CD4-positive, alpha-beta T cell (primary cell): ENCODE measurements at regions of chr2 and their contacts with region 1.

Region 1: DNA sequence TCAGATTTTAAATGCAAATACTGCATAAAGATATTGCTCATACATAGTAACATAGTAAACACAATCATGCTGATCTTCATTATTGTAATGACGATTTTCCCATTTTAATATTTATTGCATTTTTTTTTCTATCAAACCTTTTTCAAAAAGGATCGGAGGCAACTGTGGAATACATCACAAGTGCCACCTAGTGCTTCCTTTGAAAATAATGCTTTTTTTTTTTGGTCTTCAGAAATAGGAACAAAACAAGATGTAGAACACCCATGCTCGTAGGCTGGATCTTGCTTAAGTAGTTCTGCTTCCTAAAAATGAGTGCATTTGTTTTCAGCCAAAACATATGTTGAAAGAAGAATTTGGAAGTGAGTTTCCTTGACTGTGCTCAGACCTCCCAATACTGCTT is 35.7 kb upstream of the GPR155 start:
- DNase-seq: peak in 3 of 14 experiments; percentile 27 to 40 (median 39)
- ATAC-seq: no peak
- H3K4me3 ChIP-seq: no peak overlapping the region
- H3K4me3 Mint-ChIP-seq: no peak overlapping the region
- H3K27ac ChIP-seq: no peak overlapping the region
- H3K27ac Mint-ChIP-seq: no peak overlapping the region
- H3K4me1 ChIP-seq: peaks cover 2% of the 10 kb centered on the region
- H3K4me1 Mint-ChIP-seq: peaks cover 17% of the 10 kb centered on the region
- H3K27me3 ChIP-seq: no peaks in the 10 kb centered on the region
- H3K27me3 Mint-ChIP-seq: no peaks in the 10 kb centered on the region
- CTCF ChIP-seq: peak; percentile 75

Region 2: GRCh38 chr2:173696274-173696673 is 826.3 kb before region 1 on chr2:
- CTCF ChIA-PET with region 1: no interaction called
- POLR2A ChIA-PET with region 1: no interaction called
- intact Hi-C with region 1: no loop called
- DNase-seq: no peak
- ATAC-seq: no peak
- H3K4me3 ChIP-seq: no peak overlapping the region
- H3K4me3 Mint-ChIP-seq: no peak overlapping the region
- H3K27ac ChIP-seq: no peak overlapping the region
- H3K27ac Mint-ChIP-seq: no peak overlapping the region
- H3K4me1 ChIP-seq: no peaks in the 10 kb centered on the region
- H3K4me1 Mint-ChIP-seq: no peaks in the 10 kb centered on the region
- H3K27me3 ChIP-seq: no peaks in the 10 kb centered on the region
- H3K27me3 Mint-ChIP-seq: peaks cover 5% of the 10 kb centered on the region
- CTCF ChIP-seq: no peak

Region 3: DNA sequence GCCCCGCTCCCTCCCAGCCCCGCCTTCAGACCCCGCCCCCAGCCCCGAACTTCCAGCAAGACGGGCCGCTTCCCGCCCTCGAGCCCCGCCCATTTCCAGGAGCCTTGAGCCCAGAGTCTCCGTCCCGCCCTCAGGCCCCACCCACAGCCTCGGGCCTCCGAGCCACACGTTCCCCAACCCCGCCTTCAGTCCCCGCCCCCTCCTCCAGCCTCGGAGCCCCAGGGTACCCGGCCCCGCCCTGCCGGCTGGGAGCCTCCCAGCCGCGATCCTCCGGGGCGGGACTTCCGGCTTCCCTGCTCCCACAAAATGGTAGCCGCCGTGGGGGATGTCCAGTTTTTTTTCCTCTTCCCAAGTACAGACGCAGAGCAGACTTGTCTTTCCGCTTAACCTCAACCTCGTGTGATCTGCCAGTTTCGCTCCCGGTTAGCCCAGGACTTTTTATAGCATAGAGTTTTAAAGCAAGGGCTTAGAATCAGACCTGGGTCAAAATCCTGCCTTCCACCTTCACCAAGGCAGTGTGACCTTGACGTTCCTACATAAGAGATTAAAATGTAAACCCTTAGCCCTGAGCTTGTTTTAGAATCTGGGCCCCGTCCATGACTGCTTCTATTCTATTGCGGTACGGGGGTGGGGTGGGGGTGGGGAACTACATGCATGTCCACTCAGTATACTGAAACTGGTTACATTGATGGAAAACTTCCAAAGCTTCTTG is 35.3 kb before region 1 on chr2:
- CTCF ChIA-PET with region 1: no interaction called
- POLR2A ChIA-PET with region 1: interaction called, 6 read pairs
- intact Hi-C with region 1: loop called (anchors 5 kb)
- DNase-seq: peak; percentile 80 to 100 (median 98)
- ATAC-seq: peak; percentile 78
- H3K4me3 ChIP-seq: peak overlapping the region; percentile 83
- H3K4me3 Mint-ChIP-seq: peak overlapping the region; percentile 94
- H3K27ac ChIP-seq: peak overlapping the region; percentile 49 to 75
- H3K27ac Mint-ChIP-seq: peak overlapping the region; percentile 95
- H3K4me1 ChIP-seq: peaks cover 33% of the 10 kb centered on the region
- H3K4me1 Mint-ChIP-seq: peaks cover 82% of the 10 kb centered on the region
- H3K27me3 ChIP-seq: no peaks in the 10 kb centered on the region
- H3K27me3 Mint-ChIP-seq: no peaks in the 10 kb centered on the region
- CTCF ChIP-seq: no peak